ENCODE measurements at regions of chr6 and their contacts with region 1.

Region 1: GRCh38 chr6:24788048-24788665 is 10.6 kb downstream of the ARMH2 start:
- DNase-seq: no peak
- H3K4me3 Mint-ChIP-seq: no peak overlapping the region
- H3K27ac Mint-ChIP-seq: peak overlapping the region; percentile 14
- H3K4me1 Mint-ChIP-seq: peaks cover 8% of the 10 kb centered on the region
- H3K27me3 Mint-ChIP-seq: no peaks in the 10 kb centered on the region

Region 2: DNA sequence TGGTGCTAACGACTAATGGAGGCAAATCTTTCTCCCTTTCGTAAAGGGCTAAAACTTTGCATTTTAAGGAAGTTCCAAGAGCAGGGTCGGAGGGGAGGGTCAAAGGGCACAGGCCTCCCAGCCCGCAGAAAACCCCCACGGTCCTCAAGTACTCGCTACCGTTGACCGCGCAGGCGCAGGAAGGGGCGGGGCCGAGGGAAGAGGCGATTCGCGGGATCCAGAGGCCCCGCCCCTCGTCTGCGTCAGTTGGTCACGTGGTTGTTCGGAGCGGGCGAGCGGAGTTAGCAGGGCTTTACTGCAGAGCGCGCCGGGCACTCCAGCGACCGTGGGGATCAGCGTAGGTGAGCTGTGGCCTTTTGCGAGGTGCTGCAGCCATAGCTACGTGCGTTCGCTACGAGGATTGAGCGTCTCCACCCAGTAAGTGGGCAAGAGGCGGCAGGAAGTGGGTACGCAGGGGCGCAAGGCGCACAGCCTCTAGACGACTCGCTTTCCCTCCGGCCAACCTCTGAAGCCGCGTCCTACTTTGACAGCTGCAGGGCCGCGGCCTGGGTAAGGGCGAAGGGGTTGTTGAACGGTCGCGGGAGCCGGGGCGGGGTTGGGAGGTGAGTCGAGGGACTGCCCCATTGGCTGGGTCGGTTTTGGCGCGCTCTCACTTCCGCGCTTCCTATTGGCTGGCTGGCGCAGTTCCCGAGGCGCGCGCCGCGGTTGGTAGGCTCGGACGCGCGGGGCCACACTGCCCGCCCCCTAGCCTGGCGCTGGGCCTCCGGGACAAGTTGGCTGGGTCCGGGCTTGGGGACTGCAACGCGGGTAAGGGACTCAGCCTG is 13.2 kb before region 1 on chr6 and contains the start of gene GMNN:
- CTCF ChIA-PET with region 1: interaction called, 5 read pairs
- POLR2A ChIA-PET with region 1: interaction called, 26 read pairs
- DNase-seq: peak; percentile 98
- H3K4me3 Mint-ChIP-seq: peak within 1 kb of the TSS; percentile 95
- H3K27ac Mint-ChIP-seq: peak within 1 kb of the TSS; percentile 98
- H3K4me1 Mint-ChIP-seq: peaks cover 32% of the 10 kb centered on the region
- H3K27me3 Mint-ChIP-seq: no peaks in the 10 kb centered on the region
- total RNA-seq, gene GMNN: 67.6 to 69.0 TPM

Region 3: GRCh38 chr6:24809728-24810127 is 21.6 kb after region 1 on chr6:
- CTCF ChIA-PET with region 1: no interaction called
- POLR2A ChIA-PET with region 1: no interaction called
- DNase-seq: no peak
- H3K4me3 Mint-ChIP-seq: no peak overlapping the region
- H3K27ac Mint-ChIP-seq: no peak overlapping the region
- H3K4me1 Mint-ChIP-seq: no peaks in the 10 kb centered on the region
- H3K27me3 Mint-ChIP-seq: no peaks in the 10 kb centered on the region

Measured in activated CD4-positive, alpha-beta memory T cell treated with anti-CD3 and anti-CD28 coated beads, Interleukin-2, amount 10 ng/mL, durations not matched to agents 7 days and 5 days (primary cell).